Dorsolateral prefrontal cortex (tissue), 120 donors: ENCODE measurements at regions of chr20 and their contacts with region 1.

Region 1: DNA sequence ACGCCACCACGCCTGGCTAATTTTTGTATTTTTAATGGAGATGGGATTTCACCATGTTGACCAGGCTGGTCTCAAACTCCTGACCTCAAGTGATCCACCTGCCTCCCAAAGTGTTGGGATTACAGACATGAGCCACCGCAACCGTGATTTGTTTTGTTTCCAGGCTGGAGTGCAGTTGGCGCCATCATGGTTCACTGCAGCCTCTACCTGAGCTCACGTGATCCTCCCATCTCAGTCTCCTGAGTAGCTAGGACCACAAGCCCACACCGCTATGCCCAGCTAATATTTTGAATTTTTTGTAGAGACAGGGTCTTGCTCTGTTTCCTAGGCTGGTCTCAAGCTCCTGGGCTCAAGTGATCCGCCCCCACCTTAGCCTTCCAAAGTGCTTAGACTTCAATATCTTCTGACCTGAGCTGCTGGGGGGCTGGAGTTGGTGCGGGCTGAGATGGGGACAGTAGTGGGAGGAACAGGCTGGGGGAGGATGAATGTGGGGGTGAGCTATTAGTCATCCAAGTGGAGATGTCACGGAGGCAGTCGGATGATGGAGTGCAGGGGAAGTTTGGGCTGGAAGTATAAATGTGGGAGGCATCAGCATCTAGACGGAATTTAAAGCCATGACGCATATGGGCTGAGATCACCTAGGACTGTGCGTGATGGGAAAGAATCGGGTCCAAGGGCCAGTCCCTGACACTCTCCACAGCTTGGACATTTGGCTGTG is 23.1 kb upstream of the ZMYND8 start:
- DNase-seq: peak in 2 of 10 donors; percentile 38 to 58
- H3K4me3 ChIP-seq: no peak overlapping the region
- H3K27ac ChIP-seq: peak overlapping the region in 1 of 59 donors; percentile 31
- H3K27me3 ChIP-seq: no peaks in the 10 kb centered on the region
- CTCF ChIP-seq: no peak

Region 2: DNA sequence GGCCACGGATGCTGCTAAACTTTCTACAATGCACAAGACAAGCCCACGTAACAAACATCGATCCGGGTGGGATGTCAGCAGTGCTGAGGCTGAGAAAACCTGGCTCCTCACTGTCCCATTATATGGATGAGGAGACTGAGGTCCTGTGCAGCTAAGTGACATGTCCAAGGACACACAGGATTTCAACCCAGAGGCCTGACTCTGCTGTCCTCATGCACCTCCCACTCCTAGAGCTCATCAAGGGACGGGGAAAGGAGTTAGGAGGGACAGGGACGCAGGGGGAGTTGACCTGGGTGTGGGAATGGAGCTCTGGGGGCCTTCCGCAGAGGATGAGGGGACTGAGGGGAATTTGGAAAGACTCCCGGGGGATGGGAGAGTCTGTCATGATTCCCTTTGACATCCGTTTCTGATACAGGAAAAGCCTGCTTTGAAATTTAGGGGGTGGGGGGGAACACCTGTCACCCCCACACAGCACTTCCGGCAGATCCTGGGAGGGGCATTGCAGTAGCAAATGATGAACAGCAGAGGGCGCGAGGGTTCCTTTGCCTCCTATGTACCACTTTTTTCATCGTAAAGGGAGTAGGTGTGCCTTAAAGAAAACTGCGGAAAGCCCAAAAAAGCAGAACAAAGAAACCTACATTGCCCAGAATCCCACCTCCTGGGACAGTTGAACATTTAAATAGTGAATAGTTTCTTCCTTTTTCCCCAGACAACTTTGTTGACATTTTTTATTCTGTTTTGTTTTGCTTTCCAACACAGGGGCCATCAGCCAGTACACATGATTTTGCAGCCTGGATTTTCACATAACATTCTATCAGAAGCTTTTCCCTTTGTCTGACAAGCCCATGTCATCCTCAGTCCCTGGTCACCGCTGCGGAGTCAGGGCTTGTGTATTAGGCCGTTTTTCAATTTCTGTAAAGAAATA is 621.6 kb before region 1 on chr20:
- intact Hi-C with region 1: loop called (anchors 5 to 10 kb)
- DNase-seq: peak in 7 of 10 donors; percentile 12 to 55 (median 47)
- H3K4me3 ChIP-seq: peak overlapping the region in 1 of 59 donors; percentile 30
- H3K27ac ChIP-seq: no peak overlapping the region
- H3K27me3 ChIP-seq: no peaks in the 10 kb centered on the region
- CTCF ChIP-seq: peak; percentile 55 to 95 (median 88)

Region 3: DNA sequence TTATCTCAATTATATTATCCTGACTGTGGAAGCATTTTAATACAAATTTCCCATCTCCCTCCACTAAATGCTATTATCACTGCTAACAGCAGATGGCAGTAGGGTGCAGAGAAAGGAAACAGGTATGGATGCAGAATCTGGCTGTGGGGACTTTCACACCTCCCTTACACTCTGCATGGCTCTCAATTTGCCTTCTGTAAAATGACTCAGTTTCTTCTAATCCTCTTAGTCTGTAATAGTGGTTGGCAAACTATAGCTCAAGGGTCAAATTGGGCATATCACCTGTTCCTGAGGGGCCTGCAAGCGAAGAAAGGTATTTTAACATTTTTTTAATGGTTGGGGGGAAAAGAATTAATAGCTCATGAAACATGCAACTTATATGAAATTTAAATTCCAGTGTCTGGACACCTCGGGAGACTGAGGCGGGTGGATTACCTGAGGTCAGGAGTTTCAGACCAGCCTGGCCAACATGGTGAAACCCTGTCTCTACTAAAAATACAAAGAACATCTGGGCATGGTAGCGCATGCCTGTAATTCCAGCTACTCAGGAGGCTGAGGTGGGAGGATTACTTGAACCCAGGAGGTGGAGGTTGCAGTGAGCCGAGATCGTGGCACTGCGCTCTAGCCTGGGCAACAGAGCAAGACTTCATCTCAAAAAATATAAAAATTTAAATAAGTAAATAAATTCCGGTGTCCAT is 106.5 kb before region 1 on chr20:
- intact Hi-C with region 1: loop called (anchors 1 kb)
- DNase-seq: peak in 2 of 10 donors; percentile 51 to 52
- H3K4me3 ChIP-seq: no peak overlapping the region
- H3K27ac ChIP-seq: peak overlapping the region in 54 of 59 donors; percentile 1 to 91 (median 80)
- H3K27me3 ChIP-seq: no peaks in the 10 kb centered on the region
- CTCF ChIP-seq: peak; percentile 70 to 99 (median 94)

Region 4: DNA sequence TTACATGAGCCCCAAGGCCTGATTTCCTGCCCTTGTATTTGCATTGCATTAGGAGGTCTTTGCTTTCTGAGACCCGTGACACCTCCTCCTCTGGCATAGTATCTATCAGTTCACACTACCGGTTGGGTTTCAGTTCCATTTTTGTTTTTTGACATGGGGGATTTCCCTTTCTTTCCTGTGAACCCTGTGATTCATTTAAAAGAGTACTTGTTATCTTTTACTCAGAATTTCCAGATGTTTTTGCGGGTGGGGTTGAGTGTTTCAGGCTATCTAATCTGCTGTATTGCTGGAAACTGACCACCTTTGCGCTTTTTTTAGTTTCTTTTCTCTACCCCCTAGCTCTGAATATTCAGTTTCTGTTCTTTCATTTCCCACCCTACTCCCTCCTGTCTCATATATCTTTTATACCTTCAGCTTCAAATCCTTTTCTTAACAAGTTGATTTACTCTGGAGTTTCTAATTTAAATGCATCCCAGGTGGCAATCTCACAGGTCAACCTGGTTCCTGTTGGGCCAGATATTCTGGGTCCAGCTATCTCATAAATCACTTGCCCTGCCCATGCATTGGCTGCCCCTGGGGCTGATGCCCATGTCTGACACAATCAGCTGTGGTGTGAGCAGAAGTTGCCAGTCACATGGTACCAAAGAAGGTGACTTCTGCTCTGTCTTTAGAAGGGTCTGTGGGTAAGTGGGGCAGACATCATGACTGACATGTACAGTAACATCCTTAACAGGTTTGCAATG is 107.8 kb after region 1 on chr20:
- intact Hi-C with region 1: no loop called
- DNase-seq: peak in 1 of 10 donors; percentile 17
- H3K4me3 ChIP-seq: no peak overlapping the region
- H3K27ac ChIP-seq: peak overlapping the region in 1 of 59 donors; percentile 35
- H3K27me3 ChIP-seq: no peaks in the 10 kb centered on the region
- CTCF ChIP-seq: no peak

Region 5: GRCh38 chr20:47610247-47610944 is 230.8 kb after region 1 on chr20:
- intact Hi-C with region 1: loop called in 1 of 2 experiments (anchors 10 kb)
- DNase-seq: no peak
- H3K4me3 ChIP-seq: no peak overlapping the region
- H3K27ac ChIP-seq: no peak overlapping the region
- H3K27me3 ChIP-seq: no peaks in the 10 kb centered on the region
- CTCF ChIP-seq: no peak

Region 6: GRCh38 chr20:47620808-47621805 is 241.5 kb after region 1 on chr20:
- intact Hi-C with region 1: loop called (anchors 5 to 10 kb)
- DNase-seq: no peak
- H3K4me3 ChIP-seq: no peak overlapping the region
- H3K27ac ChIP-seq: no peak overlapping the region
- H3K27me3 ChIP-seq: no peaks in the 10 kb centered on the region
- CTCF ChIP-seq: peak; percentile 73 to 96 (median 87)